ENCODE measurements at regions of chr7 and their contacts with region 1.

Region 1: DNA sequence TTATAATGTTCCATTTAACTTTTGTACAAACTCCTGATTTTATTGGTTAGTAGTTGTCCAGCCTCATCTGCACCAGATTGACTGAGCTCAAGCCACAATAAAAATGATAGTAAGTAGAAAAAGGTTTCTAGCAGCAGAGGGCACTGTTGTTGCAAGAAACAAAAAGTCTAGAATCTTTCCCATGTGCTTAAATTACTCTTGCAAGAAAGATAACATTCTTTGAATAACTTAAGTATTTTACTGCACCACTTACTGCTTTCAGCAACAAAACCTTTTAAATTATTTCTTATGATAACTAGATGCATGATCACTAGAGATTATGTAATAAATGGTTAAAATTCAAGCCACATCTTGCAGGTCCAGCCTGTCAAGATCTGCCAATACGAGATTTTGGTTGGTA is 27.0 kb downstream of the LMOD2 start:
- DNase-seq: peak; percentile 38
- H3K4me3 ChIP-seq: no peak overlapping the region
- H3K27ac ChIP-seq: no peak overlapping the region
- H3K27me3 ChIP-seq: no peaks in the 10 kb centered on the region
- CTCF ChIP-seq: peak; percentile 61

Region 2: DNA sequence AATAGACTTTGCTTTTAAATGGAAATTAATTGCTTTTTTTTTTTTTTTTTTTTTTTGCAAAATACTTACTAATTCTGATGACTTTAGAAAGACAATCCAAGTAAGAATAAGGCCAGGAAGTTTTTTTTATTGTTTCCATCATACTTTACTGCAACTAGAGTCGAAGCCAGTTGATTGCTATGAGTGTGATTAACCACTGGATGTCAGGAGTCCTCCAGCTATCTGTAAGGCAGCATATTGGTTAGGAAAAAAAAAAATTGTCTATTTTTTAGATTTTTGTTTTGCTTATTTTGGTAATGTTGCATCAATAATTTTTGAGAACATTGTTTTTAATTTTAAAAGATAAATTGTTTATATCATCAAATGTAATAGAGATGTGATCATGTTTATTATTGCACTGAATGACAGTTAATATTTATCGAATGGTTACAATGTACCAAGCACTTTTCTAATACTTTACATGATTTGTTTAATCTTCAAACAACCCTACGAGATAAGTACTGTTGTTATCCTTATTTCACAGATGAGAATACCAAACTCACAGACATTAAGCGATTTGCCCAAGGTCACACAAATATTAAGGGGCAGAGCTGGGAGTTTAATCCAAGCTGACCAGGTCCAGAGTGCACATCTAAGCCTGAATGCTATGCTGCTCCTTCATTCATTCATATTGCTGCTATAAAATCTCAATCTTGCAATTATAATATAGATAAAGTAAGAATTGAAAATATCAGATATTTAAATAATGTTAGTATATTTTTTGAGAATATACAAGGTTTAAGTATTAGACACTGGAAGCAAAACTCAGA is 46.9 kb before region 1 on chr7:
- CTCF ChIA-PET with region 1: interaction called, 17 read pairs
- POLR2A ChIA-PET with region 1: no interaction called
- DNase-seq: no peak
- H3K4me3 ChIP-seq: no peak overlapping the region
- H3K27ac ChIP-seq: no peak overlapping the region
- H3K27me3 ChIP-seq: peaks cover 3% of the 10 kb centered on the region
- CTCF ChIP-seq: peak; percentile 71

Region 3: GRCh38 chr7:123666492-123666891 is 16.2 kb before region 1 on chr7:
- CTCF ChIA-PET with region 1: interaction called, 10 read pairs
- POLR2A ChIA-PET with region 1: no interaction called
- DNase-seq: no peak
- H3K4me3 ChIP-seq: no peak overlapping the region
- H3K27ac ChIP-seq: no peak overlapping the region
- H3K27me3 ChIP-seq: no peaks in the 10 kb centered on the region
- CTCF ChIP-seq: no peak

Region 4: GRCh38 chr7:123748734-123749536 is 66.2 kb after region 1 on chr7 and contains the start of gene WASL:
- CTCF ChIA-PET with region 1: interaction called, 10 read pairs
- POLR2A ChIA-PET with region 1: interaction called, 3 read pairs
- DNase-seq: peak; percentile 65
- H3K4me3 ChIP-seq: peak within 1 kb of the TSS; percentile 81
- H3K27ac ChIP-seq: peak within 1 kb of the TSS; percentile 96
- H3K27me3 ChIP-seq: no peaks in the 10 kb centered on the region
- CTCF ChIP-seq: no peak; the same call in 1 of the 2 replicates
- polyA plus RNA-seq, gene WASL: 11.6 and 11.9 TPM in 2 replicates

Region 5: DNA sequence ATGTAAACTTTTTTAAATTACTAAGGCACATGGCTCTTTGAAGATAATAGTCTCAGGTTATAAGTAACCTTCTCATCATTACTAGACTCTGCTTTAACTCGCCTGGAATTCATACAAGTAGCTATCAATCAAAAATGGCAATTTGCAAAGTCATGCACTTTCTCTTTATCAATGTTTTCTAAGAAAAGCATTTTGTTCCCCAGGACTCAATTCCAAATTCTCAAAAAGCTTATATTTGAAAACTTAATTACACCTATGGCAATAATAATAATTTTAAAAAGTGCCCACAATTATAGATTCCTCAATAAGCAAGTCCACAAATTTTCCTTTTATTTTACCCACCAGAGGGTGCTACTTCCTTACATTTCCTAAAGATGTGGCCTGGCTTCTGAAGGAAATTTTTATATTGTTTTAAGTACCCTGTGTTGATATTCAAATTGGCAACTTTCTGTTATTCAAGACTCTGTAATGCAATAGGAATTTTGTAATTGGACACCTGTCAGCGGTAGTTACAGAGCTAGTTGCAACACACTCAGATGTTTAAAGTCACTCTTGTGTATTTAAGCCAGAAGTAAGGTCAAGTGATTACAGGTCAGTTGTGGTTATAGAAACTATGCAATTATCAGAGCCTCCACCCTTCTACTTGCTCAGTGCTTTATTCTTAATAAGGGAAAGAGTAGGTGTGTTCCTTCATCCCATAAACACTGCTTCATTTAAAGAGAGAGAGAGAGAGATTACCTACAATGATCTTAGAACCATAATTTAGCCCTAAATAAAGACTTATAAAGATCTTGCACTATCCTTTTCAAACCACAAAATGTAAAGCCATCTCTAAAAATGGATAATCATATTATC is 115.2 kb after region 1 on chr7:
- CTCF ChIA-PET with region 1: interaction called, 29 read pairs
- POLR2A ChIA-PET with region 1: no interaction called
- DNase-seq: peak; percentile 39
- H3K4me3 ChIP-seq: no peak overlapping the region
- H3K27ac ChIP-seq: no peak overlapping the region
- H3K27me3 ChIP-seq: peaks cover 6% of the 10 kb centered on the region
- CTCF ChIP-seq: peak; percentile 52

Region 6: GRCh38 chr7:123871998-123872867 is 189.5 kb after region 1 on chr7:
- CTCF ChIA-PET with region 1: interaction called, 23 read pairs
- POLR2A ChIA-PET with region 1: no interaction called
- DNase-seq: peak; percentile 1
- H3K4me3 ChIP-seq: no peak overlapping the region
- H3K27ac ChIP-seq: no peak overlapping the region
- H3K27me3 ChIP-seq: no peaks in the 10 kb centered on the region
- CTCF ChIP-seq: peak; percentile 46

Region 7: DNA sequence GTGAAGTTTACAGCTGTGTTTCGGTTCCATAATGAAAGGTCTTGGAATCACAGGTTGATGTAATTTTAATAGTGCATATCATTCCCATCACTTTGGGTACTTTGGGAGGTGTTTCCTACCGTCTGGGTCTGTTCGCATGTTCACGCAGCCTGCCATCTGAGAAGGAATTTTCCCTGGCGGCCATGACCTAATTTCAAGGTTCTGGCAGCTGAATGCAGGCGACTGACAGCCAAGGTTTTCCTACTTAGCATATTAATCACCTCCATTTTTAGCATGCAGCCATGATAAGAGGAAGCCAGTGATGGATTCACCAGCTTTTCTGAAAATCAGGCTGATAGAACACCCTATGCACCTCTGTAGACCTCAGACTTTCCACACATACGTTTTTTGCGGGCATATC is 669.3 kb after region 1 on chr7:
- CTCF ChIA-PET with region 1: no interaction called
- POLR2A ChIA-PET with region 1: no interaction called
- DNase-seq: no peak
- H3K4me3 ChIP-seq: no peak overlapping the region
- H3K27ac ChIP-seq: no peak overlapping the region
- H3K27me3 ChIP-seq: no peaks in the 10 kb centered on the region
- CTCF ChIP-seq: no peak

Measured in AG04450 (cell line).